Activated T-helper 1 cell treated with anti-CD3 and anti-CD28 coated beads, Interleukin-12 subunit alpha, Interleukin-12 subunit beta, Interleukin-2, Interleukin-4 antibody, amounts not matched to agents 30 ng/mL and 10 ng/mL and 1 ng/mL, durations not matched to agents 14 hours and 24 hours and 36 hours (primary cell): ENCODE measurements at regions of chr3 and their contacts with region 1.

Region 1: GRCh38 chr3:172595641-172596393 is 72.6 kb upstream of the TNFSF10 start:
- DNase-seq: peak; percentile 42
- H3K4me3 Mint-ChIP-seq: peak overlapping the region; percentile 84
- H3K27ac Mint-ChIP-seq: peak overlapping the region; percentile 88
- H3K4me1 Mint-ChIP-seq: peaks cover 69% of the 10 kb centered on the region
- H3K27me3 Mint-ChIP-seq: peaks cover 4% of the 10 kb centered on the region

Region 2: GRCh38 chr3:172476347-172476746 is 119.5 kb before region 1 on chr3:
- intact Hi-C with region 1: loop called (anchors 1 kb)
- DNase-seq: no peak
- H3K4me3 Mint-ChIP-seq: peak overlapping the region; percentile 16
- H3K27ac Mint-ChIP-seq: no peak overlapping the region
- H3K4me1 Mint-ChIP-seq: peaks cover 22% of the 10 kb centered on the region
- H3K27me3 Mint-ChIP-seq: peaks cover 7% of the 10 kb centered on the region

Region 3: DNA sequence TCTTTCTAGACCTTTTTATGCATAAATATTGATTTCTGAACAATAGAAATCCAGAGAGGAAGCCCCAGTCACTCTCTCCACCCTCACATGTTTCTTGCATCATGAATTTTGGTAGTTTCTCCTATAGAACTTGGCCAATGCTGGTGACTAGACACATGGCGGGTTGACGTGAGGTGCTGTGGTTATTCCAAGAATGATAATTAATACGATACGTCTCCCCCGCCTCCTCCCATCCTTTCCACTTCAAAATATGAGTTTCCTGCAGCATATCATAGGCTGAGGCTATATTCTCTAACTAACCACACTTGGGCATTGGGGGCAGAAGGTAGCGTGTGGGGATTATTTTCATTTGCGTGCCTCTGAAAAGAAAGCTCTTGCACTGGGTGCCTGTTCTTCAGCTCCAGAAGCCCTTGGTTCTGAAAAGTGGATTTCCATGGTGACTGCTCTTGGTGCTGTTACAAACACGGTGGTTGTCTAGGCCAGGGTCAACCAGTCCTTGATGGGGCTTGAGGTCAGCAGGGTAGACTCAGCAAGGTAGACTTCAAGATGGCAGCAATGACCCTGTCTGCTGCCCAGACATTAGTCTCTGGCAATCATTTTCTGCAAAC is 77.9 kb before region 1 on chr3:
- intact Hi-C with region 1: loop called (anchors 1 kb)
- DNase-seq: peak; percentile 57
- H3K4me3 Mint-ChIP-seq: peak overlapping the region; percentile 88
- H3K27ac Mint-ChIP-seq: peak overlapping the region; percentile 97
- H3K4me1 Mint-ChIP-seq: peaks cover 80% of the 10 kb centered on the region
- H3K27me3 Mint-ChIP-seq: no peaks in the 10 kb centered on the region

Region 4: DNA sequence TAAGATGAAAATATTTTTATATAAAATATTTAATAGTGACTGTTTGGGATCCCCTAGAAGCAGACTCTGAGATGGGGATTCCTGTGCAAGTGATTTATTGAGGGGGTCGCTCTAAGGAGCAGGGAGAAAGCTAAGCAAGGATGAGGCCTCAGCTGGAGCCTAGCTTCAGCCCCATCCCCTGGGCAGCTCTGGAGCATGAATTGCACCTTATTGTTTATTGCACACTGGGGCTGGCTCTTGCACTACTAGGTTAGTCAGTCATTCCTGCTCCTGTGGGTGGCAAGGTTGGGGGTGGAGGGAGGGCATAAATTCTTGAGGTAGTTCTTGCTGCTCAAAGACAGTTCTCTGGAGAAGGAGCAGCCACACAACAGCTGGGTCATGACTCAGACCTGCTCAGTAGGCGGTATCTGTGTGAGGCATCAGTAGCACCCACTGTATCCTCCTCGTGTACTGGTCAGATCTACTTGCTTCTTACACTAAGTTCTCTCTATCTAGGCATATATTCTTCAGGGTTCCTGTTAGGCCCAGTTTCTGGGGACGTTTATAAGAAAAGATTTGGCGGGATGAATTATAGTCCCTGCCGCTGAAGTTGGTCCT is 45.4 kb before region 1 on chr3:
- intact Hi-C with region 1: loop called (anchors 1 kb)
- DNase-seq: peak; percentile 61
- H3K4me3 Mint-ChIP-seq: peak overlapping the region; percentile 45
- H3K27ac Mint-ChIP-seq: peak overlapping the region; percentile 84
- H3K4me1 Mint-ChIP-seq: peaks cover 76% of the 10 kb centered on the region
- H3K27me3 Mint-ChIP-seq: no peaks in the 10 kb centered on the region

Region 5: DNA sequence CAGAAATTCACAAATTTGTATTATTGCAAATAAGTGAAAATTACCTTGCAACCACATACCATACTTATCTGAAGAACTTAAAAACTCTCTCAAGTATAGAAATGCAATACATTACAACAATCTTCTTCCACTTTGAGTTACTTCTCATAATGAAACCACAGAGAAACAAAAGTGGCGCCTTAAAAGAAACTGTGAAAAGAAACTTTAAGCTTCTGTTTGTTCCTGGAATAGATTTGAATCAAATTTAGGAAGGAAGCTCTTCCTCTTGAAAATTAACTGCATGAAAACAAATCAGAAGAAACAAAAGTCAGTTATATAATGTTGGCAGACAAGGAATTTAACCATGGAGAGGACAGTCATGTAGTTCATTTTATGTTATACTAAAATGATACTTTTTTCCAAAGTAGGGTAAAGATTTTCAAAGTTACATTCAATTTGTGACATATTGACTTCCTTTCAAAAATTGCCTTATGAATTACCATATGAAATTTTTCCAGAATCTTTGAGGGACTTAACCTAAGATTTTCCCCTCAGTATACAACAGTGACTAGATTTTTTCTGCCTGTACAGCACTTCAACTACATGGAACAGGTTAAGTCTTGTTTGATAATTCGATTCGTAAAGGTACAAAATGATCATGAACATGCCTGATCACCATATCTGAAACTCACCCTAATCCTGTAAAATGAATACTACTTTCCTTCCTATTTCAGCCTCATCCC is 15.0 kb before region 1 on chr3:
- intact Hi-C with region 1: loop called (anchors 1 kb)
- DNase-seq: no peak
- H3K4me3 Mint-ChIP-seq: peak overlapping the region; percentile 79
- H3K27ac Mint-ChIP-seq: peak overlapping the region; percentile 88
- H3K4me1 Mint-ChIP-seq: peaks cover 97% of the 10 kb centered on the region
- H3K27me3 Mint-ChIP-seq: no peaks in the 10 kb centered on the region

Region 6: DNA sequence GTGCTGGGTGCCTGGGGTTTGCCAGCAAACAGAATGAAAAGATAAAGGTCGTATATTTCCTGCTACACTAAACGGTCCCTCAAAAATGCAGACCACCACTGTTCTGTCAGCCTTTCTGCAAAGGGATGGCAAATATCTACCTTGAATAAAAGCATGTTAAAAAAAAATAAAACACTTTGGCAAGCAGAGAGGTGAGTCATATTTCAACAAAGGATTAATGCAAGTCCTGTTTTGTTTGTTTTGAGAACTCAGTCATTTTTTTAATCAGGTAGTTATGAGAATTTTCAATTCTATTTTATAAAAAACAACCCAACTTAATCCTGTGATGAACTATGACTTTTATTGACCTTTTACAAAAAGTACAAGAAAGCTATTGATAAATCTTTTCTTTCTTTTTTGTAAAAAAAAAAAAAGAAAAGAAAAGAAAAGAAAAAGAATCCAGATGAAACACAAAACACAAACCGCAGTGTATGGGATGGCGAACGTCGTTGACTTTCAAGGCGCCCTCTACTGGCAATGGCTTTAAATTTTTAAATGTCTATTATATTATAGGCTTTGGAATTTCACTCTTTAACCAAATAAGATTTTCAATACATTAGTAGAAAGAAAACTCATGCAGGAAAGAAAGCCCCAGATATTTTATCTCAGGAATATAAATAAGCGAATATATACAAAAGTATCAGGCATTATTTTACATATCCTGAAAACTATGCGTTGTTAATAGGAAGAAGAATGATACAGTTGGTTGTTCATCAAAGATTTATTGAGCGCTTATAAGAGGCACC is 27.3 kb after region 1 on chr3:
- intact Hi-C with region 1: loop called (anchors 1 kb)
- DNase-seq: no peak
- H3K4me3 Mint-ChIP-seq: peak overlapping the region; percentile 50
- H3K27ac Mint-ChIP-seq: no peak overlapping the region
- H3K4me1 Mint-ChIP-seq: peaks cover 25% of the 10 kb centered on the region
- H3K27me3 Mint-ChIP-seq: peaks cover 2% of the 10 kb centered on the region

Region 7: DNA sequence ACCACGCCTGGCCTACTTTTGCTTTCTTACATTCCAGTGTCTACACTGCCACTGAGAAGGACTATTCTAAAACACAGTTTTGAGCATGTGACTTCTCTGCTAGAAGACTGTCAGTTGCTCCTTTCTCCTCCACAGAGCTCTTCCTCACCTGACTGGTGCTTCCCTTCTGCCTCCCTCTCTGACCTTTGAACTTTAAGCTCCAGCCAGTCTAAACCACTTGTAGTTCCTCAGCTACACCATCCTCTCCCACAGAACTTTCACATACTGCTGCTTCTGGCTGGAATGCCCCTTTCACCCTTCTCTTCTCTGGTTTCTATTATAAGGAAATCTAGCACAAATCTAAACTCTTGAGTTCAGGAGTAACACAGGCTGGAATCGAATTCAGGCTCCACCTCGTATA is 105.9 kb after region 1 on chr3:
- intact Hi-C with region 1: no loop called
- DNase-seq: no peak
- H3K4me3 Mint-ChIP-seq: no peak overlapping the region
- H3K27ac Mint-ChIP-seq: no peak overlapping the region
- H3K4me1 Mint-ChIP-seq: peaks cover 6% of the 10 kb centered on the region
- H3K27me3 Mint-ChIP-seq: no peaks in the 10 kb centered on the region

Region 8: DNA sequence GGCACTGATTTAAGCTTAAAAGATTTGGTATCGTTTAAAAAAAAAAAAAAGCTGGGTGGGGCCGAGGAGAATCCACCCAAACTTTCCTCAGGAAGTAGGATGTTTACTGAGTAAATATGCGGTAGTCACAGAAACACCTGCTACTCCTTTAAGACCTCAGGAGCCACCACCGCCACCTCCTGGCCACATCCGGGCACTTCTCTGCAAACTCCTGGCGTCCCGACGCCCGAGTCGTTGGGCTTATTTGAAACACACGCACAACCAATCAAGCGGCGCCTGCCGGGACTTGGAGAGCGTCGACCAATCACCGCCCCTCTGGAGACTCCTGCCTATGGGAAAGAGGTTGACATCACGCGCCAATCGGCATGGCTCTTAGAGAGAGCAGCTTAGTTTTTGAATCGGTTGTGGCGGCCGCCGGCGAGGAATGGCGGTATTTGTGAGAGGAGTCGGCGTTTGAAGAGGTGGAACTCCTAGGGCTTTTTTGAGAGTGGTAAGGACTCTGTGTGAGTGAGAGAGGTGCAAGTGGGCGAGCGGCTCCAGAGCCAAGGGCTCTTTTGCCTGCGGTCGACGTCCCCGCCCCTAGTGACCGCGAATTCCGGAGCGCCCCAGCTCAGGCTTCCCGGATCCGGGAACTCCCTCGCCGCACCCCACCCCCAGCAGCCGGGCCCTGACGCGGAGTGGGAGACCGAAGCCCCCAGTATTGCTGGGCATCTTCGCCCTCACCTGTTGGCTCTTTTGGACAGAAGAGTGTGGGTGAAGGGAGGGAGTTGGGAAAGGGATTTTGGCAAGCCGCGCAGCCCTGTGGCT is 154.8 kb after region 1 on chr3 and contains the start of gene ECT2:
- intact Hi-C with region 1: loop called (anchors 1 kb)
- DNase-seq: peak; percentile 97
- H3K4me3 Mint-ChIP-seq: peak within 1 kb of the TSS; percentile 94
- H3K27ac Mint-ChIP-seq: peak within 1 kb of the TSS; percentile 97
- H3K4me1 Mint-ChIP-seq: peaks cover 38% of the 10 kb centered on the region
- H3K27me3 Mint-ChIP-seq: peaks cover 4% of the 10 kb centered on the region
- total RNA-seq, gene ECT2: 34.5 and 39.6 TPM in 2 replicates